ENCODE measurements at regions of chr17 and their contacts with region 1.

Region 1: DNA sequence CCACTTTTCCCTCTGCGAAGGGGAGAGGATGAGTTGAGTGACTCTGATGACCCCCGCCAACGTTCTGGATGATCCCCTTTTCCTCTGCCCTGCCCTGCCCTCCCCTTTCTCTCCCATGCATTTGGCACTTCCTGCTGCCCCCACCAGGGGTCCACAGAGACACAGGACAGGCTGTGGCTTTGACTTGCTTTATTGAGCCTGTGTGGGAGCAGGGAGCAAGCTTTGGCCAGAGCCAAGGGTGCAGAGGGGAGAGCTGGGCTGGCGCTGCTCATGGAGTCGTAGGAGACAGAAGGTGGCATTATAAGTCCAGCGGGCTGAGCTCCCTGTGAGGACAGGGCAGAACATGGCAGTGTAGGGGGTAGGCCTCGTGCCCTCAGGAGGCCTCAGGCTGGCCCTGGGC is 1.6 kb downstream of the PPY start:
- DNase-seq: no peak
- ATAC-seq: no peak

Region 2: DNA sequence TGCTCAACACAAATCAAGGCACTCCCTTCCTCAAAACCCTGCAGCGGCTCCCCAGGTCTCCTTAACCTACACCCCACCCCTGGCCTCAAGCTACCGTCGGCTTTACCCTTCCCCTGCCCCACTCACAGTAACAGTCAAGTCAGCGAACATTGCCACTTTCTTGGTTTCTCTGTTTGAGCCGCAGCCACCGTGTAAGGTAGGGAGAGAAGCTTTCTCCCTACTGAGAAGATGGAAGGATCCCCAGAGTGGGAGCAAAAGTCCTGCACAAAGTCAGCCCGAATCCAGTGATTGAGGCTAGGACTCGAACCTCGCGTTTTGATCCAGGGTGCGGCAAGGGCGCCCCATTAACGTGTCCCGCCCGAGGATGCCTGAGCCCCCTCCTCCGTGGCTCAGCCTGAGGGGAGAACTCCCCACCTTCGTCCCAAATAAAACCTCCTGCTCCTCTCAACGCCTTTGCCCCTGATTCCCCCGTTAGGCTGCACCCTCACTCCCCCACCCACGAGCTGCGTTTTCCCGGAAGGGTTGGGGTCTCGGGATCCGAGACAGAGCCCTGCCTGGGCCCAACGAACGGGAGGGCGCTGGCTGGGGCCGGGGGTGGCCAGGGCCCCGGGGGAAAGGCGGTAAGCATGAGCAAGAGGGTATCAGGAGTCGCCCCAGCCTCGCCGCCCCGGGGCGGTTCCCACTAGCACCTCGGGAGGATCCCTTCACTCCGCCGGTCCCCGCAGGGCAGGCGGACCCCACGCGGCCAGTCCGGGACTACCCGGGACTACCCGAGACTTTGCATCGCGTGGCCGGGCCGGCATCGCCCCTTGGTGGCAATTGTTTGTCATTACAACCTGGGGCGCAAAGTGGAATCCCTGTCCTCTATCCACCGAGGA is 53.9 kb after region 1 on chr17:
- intact Hi-C with region 1: loop called (anchors 5 kb)
- DNase-seq: peak; percentile 74
- ATAC-seq: peak; percentile 82